ENCODE measurements at regions of chr7 and their contacts with region 1.

Region 1: DNA sequence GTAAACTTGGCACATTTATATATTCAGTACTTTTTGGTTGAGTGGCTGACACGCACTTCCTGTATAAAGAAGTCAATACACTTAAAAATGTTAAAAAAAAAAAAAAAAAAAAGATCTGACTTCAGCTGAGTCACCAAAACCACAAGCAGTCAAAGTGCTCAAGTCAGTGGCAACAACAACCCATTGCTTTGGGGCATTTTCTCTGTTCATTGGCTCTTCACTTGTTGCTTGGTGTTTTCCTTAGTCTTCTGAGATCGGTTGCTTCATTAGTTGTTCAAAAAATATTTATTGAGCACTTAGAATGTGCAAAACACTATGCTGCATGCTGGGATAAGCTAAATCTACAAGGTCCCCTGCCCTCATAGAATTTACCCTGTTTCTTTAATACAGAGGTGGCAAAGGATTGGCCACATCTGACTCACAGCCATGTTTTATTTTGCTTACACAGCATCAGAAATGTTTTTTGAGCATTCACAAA is 63.7 kb downstream of the ZNRF2 start:
- DNase-seq: peak in 8 of 9 donors; percentile 42 to 81 (median 72)
- ATAC-seq: peak; percentile 92
- H3K4me3 ChIP-seq: no peak overlapping the region
- H3K4me3 Mint-ChIP-seq: peak overlapping the region; percentile 19 to 92 (median 58)
- H3K27ac ChIP-seq: no peak overlapping the region
- H3K27ac Mint-ChIP-seq: peak overlapping the region; percentile 81 to 98 (median 90)
- H3K4me1 ChIP-seq: peaks cover 18 to 25% of the 10 kb centered on the region in 2 donors
- H3K4me1 Mint-ChIP-seq: peaks cover 32 to 69% (median 46%) of the 10 kb centered on the region in 7 donors
- H3K27me3 ChIP-seq: no peaks in the 10 kb centered on the region
- H3K27me3 Mint-ChIP-seq: no peaks in the 10 kb centered on the region

Region 2: DNA sequence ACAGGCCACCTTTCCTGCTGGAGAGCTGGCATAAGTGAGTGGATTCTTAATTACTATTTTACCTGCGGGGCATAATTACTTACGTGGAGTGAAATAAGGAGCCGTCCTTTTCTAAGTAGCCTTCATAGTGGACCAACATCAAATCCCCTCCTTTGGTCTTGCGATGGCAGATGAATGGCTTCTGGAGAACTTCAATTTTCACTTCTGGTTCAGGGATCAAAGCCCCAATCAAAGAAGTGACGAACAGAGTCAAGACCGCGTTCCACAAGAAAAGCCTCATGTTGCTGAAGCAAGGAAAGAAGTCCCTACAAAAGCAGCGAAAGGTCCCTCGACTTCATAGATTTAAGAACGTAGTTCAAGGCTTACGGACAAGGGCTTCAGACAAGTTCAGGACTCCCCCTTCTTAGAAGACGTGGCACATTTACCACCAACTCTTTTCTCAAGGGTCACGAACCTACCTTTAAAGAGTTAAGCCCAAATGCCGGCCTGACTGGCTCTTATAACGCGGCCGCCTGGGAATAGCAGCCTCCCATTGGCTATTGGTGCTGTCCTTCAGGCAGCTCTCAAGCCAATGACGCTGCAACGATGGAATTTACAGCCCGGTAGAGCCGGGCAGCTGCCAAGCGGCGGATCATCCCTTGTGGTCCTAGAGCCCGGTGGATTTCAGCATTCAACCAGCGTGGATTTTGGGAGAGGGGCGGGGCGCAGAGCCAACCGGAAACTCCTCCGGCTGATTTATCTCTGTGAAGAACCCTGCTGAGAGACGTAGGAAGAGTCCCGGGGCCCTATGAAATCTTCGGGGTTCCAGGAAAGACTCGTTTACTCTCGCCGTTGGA is 321.7 kb before region 1 on chr7 and contains the start of gene FKBP14:
- CTCF ChIA-PET with region 1: no interaction called
- POLR2A ChIA-PET with region 1: no interaction called
- intact Hi-C with region 1: loop called (anchors 1 to 2 kb)
- DNase-seq: peak; percentile 70 to 93 (median 89)
- ATAC-seq: peak; percentile 91
- H3K4me3 ChIP-seq: peak within 1 kb of the TSS; percentile 79
- H3K4me3 Mint-ChIP-seq: peak within 1 kb of the TSS in 6 of 10 donors; percentile 85 to 98 (median 89)
- H3K27ac ChIP-seq: peak within 1 kb of the TSS; percentile 69
- H3K27ac Mint-ChIP-seq: peak within 1 kb of the TSS; percentile 74 to 94 (median 88)
- H3K4me1 ChIP-seq: peaks cover 6 to 20% of the 10 kb centered on the region in 2 donors
- H3K4me1 Mint-ChIP-seq: peaks cover 28 to 47% (median 40%) of the 10 kb centered on the region in 7 donors
- H3K27me3 ChIP-seq: no peaks in the 10 kb centered on the region
- H3K27me3 Mint-ChIP-seq: no peaks in the 10 kb centered on the region
- total RNA-seq, gene FKBP14: 4.0 to 6.5 (median 5.3) TPM

Region 3: DNA sequence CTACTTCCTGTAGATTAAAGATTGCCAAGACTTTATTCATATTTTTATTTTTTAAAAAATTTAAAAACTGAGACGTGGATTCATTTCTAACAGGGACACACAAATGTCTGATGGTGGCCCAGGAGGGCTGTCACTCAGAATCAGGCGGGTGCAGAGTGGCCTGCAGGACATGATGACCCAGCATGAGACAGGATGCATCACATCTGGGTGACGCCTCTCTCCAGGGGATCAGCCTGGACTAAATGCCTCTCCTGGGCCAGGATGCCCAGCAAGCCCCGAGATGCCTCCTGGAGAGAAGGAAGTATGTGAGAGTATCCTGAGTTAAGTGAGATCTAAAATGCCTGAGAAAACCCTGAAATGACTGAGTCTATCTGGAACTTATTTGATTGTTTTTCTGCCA is 230.2 kb before region 1 on chr7:
- CTCF ChIA-PET with region 1: no interaction called
- POLR2A ChIA-PET with region 1: no interaction called
- intact Hi-C with region 1: no loop called
- DNase-seq: no peak
- ATAC-seq: no peak
- H3K4me3 ChIP-seq: no peak overlapping the region
- H3K4me3 Mint-ChIP-seq: no peak overlapping the region
- H3K27ac ChIP-seq: no peak overlapping the region
- H3K27ac Mint-ChIP-seq: no peak overlapping the region
- H3K4me1 ChIP-seq: peaks cover 0 to 4% of the 10 kb centered on the region in 2 donors
- H3K4me1 Mint-ChIP-seq: peaks cover 4 to 9% (median 7%) of the 10 kb centered on the region in 7 donors
- H3K27me3 ChIP-seq: no peaks in the 10 kb centered on the region
- H3K27me3 Mint-ChIP-seq: no peaks in the 10 kb centered on the region

Region 4: DNA sequence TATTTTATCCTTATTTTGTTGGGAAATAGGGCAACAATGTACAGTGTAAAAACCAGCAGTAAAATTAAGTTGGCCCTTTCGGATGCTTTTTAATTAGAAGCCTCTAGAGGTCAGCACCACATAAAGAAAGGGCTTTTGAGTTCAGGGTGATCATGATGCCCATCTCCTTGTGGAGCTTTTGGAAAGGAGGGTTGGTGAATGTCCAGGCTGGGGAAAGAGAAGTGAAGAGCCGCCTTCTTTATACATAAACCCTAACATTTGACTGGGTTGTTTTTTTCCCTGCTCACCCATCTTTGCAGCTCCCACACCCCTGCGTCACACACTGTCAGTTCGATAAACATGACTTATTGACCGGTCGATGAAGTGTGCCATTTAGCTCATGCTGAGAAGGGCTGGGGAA is 183.6 kb before region 1 on chr7:
- CTCF ChIA-PET with region 1: no interaction called
- POLR2A ChIA-PET with region 1: no interaction called
- intact Hi-C with region 1: loop called (anchors 1 kb)
- DNase-seq: no peak
- ATAC-seq: peak; percentile 43
- H3K4me3 ChIP-seq: no peak overlapping the region
- H3K4me3 Mint-ChIP-seq: no peak overlapping the region
- H3K27ac ChIP-seq: no peak overlapping the region
- H3K27ac Mint-ChIP-seq: no peak overlapping the region
- H3K4me1 ChIP-seq: peaks cover 10 to 20% of the 10 kb centered on the region in 2 donors
- H3K4me1 Mint-ChIP-seq: peaks cover 25 to 44% (median 32%) of the 10 kb centered on the region in 7 donors
- H3K27me3 ChIP-seq: no peaks in the 10 kb centered on the region
- H3K27me3 Mint-ChIP-seq: peaks cover 0 to 3% (median 0%) of the 10 kb centered on the region in 5 donors

Region 5: DNA sequence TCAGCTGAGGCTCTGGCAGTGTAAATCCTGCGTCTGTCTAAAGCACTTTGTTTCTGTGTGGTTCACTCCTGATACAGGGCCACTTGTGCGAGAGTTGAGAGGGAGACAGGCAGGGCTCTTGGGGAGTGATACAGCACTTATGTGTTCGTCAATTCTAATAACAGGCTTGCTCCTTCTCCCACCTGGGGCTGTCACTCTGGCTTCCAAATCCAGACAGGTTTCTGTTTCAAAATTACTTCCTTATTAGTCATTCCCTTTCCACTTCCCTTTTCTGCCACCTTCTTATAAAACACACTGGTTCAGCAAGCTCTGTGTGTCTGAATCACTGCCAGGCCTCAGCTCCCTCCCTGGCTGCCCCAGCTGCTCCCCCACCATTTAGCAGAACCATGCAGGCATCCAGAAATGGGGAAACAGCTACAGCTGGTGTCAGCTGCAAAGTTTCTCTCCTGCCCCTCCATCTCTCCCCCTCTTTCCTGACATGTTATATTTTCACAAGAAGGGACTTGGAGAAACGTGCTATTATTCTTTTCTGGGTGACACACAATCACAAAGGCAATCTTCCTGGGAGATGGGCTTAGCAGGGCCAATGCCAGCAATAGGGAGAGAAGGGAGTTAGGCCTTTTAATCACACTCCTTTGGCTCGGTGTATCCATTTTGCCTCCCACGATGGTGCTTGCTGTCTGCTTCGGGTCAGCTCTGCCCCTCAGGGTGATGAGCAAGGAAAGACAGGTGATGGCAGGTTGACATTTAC is 122.1 kb before region 1 on chr7:
- CTCF ChIA-PET with region 1: no interaction called
- POLR2A ChIA-PET with region 1: no interaction called
- intact Hi-C with region 1: no loop called
- DNase-seq: no peak
- ATAC-seq: peak; percentile 88
- H3K4me3 ChIP-seq: no peak overlapping the region
- H3K4me3 Mint-ChIP-seq: no peak overlapping the region
- H3K27ac ChIP-seq: no peak overlapping the region
- H3K27ac Mint-ChIP-seq: no peak overlapping the region
- H3K4me1 ChIP-seq: no peaks in the 10 kb centered on the region
- H3K4me1 Mint-ChIP-seq: peaks cover 0 to 8% (median 0%) of the 10 kb centered on the region in 7 donors
- H3K27me3 ChIP-seq: no peaks in the 10 kb centered on the region
- H3K27me3 Mint-ChIP-seq: no peaks in the 10 kb centered on the region

Region 6: GRCh38 chr7:30322271-30323005 is 25.7 kb before region 1 on chr7:
- CTCF ChIA-PET with region 1: interaction called, 7 read pairs
- POLR2A ChIA-PET with region 1: interaction called, 35 read pairs
- intact Hi-C with region 1: loop called (anchors 1 kb)
- DNase-seq: peak in 6 of 9 donors; percentile 9 to 48 (median 34)
- ATAC-seq: peak; percentile 86
- H3K4me3 ChIP-seq: peak overlapping the region; percentile 44
- H3K4me3 Mint-ChIP-seq: peak overlapping the region; percentile 72 to 92 (median 86)
- H3K27ac ChIP-seq: peak overlapping the region; percentile 75
- H3K27ac Mint-ChIP-seq: peak overlapping the region; percentile 88 to 97 (median 93)
- H3K4me1 ChIP-seq: peaks cover 20 to 26% of the 10 kb centered on the region in 2 donors
- H3K4me1 Mint-ChIP-seq: peaks cover 41 to 75% (median 71%) of the 10 kb centered on the region in 7 donors
- H3K27me3 ChIP-seq: no peaks in the 10 kb centered on the region
- H3K27me3 Mint-ChIP-seq: no peaks in the 10 kb centered on the region

Region 7: DNA sequence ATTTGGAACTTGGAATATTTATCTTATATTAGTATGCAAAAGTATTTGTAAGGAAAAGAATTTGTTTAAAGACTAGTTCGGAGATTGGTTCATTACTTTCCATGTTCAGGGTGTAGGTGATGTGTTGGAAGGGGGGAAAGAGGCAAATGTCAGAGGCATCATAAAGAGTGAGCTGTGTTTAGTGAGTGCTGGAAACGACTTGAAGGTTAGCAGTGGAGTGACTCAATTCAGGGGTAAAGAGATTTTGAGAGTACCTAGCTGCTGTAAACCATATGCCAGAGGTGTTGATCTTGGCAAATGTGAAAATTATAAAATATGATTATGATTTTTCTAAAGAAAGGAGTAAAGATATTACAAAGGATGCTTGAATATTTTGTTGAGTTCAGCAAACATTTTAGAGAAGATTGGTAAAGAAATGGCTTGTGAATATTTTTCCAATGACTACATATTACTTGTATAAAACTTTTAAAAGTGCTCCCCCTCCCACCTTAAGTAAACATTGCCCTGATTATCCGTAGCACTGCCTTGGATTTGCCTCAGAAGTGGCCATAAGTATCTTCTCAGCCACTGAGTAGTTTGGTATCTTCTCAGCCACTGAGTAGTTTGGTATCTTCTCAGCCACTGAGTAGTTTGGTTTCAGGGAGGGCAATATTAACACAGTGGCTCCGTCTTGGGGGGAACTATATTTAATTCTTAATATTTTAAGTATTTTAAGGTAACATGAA is 12.2 kb before region 1 on chr7:
- CTCF ChIA-PET with region 1: no interaction called
- POLR2A ChIA-PET with region 1: interaction called, 6 read pairs
- intact Hi-C with region 1: loop called in 1 of 2 experiments (anchors 1 kb)
- DNase-seq: no peak
- ATAC-seq: no peak
- H3K4me3 ChIP-seq: no peak overlapping the region
- H3K4me3 Mint-ChIP-seq: no peak overlapping the region
- H3K27ac ChIP-seq: no peak overlapping the region
- H3K27ac Mint-ChIP-seq: no peak overlapping the region
- H3K4me1 ChIP-seq: peaks cover 5 to 16% of the 10 kb centered on the region in 2 donors
- H3K4me1 Mint-ChIP-seq: peaks cover 24 to 64% (median 50%) of the 10 kb centered on the region in 7 donors
- H3K27me3 ChIP-seq: no peaks in the 10 kb centered on the region
- H3K27me3 Mint-ChIP-seq: peaks cover 0 to 2% (median 0%) of the 10 kb centered on the region in 5 donors

Region 8: GRCh38 chr7:30504347-30505173 is 156.4 kb after region 1 on chr7 and contains the start of gene GGCT:
- CTCF ChIA-PET with region 1: no interaction called
- POLR2A ChIA-PET with region 1: interaction called, 4 read pairs
- intact Hi-C with region 1: loop called in 1 of 2 experiments (anchors 1 kb)
- DNase-seq: peak; percentile 88 to 97 (median 95)
- ATAC-seq: peak; percentile 99
- H3K4me3 ChIP-seq: peak within 1 kb of the TSS; percentile 91
- H3K4me3 Mint-ChIP-seq: peak within 1 kb of the TSS; percentile 90 to 96 (median 95)
- H3K27ac ChIP-seq: peak within 1 kb of the TSS; percentile 72
- H3K27ac Mint-ChIP-seq: peak within 1 kb of the TSS; percentile 87 to 99 (median 91)
- H3K4me1 ChIP-seq: peaks cover 12% of the 10 kb centered on the region in 2 donors
- H3K4me1 Mint-ChIP-seq: peaks cover 19 to 51% (median 44%) of the 10 kb centered on the region in 7 donors
- H3K27me3 ChIP-seq: no peaks in the 10 kb centered on the region
- H3K27me3 Mint-ChIP-seq: no peaks in the 10 kb centered on the region
- total RNA-seq, gene GGCT: 9.5 to 39.2 (median 10.8) TPM

Region 9: GRCh38 chr7:30594549-30595435 is 246.7 kb after region 1 on chr7 and contains the start of gene GARS1:
- CTCF ChIA-PET with region 1: no interaction called
- POLR2A ChIA-PET with region 1: no interaction called
- intact Hi-C with region 1: loop called in 1 of 2 experiments (anchors 1 kb)
- DNase-seq: peak; percentile 85 to 92 (median 90)
- ATAC-seq: peak; percentile 91
- H3K4me3 ChIP-seq: peak within 1 kb of the TSS; percentile 62
- H3K4me3 Mint-ChIP-seq: peak within 1 kb of the TSS; percentile 91 to 100 (median 99)
- H3K27ac ChIP-seq: peak within 1 kb of the TSS; percentile 91
- H3K27ac Mint-ChIP-seq: peak within 1 kb of the TSS; percentile 97 to 100 (median 99)
- H3K4me1 ChIP-seq: peaks cover 3 to 22% of the 10 kb centered on the region in 2 donors
- H3K4me1 Mint-ChIP-seq: peaks cover 52 to 88% (median 77%) of the 10 kb centered on the region in 7 donors
- H3K27me3 ChIP-seq: no peaks in the 10 kb centered on the region
- H3K27me3 Mint-ChIP-seq: no peaks in the 10 kb centered on the region
- total RNA-seq, gene GARS1: 73.8 to 143 (median 75.8) TPM

Measured in naive thymus-derived CD4-positive, alpha-beta T cell (primary cell).